Colonic mucosa (tissue), 4 donors: ENCODE measurements at regions of chr5 and their contacts with region 1.

Region 1: GRCh38 chr5:8329773-8330172 is 460.8 kb downstream of the MTRR start:
- DNase-seq: no peak
- H3K4me3 ChIP-seq: no peak overlapping the region
- H3K27ac ChIP-seq: no peak overlapping the region
- H3K4me1 ChIP-seq: no peaks in the 10 kb centered on the region
- H3K27me3 ChIP-seq: no peaks in the 10 kb centered on the region
- CTCF ChIP-seq: no peak

Region 2: DNA sequence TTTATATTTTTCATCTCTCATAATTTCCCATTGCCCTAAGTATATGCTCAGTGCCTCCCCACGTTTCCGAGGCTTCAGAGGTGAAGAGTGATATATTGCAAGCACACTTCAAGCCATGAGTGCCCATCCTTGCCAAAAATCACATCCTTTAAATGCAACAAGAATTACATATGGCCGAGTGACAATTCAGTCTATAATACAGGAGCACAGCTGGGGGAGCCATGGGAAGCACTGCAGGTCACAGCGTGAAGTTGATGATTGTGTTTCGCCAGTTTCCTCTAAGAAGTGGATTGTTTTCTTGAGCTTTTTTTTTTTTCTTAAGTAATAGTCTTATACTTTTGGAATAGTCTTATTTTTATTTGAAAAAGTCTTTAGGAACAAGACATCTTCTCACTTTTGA is 399.8 kb before region 1 on chr5:
- intact Hi-C with region 1: loop called (anchors 10 kb)
- DNase-seq: no peak
- H3K4me3 ChIP-seq: no peak overlapping the region
- H3K27ac ChIP-seq: no peak overlapping the region
- H3K4me1 ChIP-seq: no peaks in the 10 kb centered on the region
- H3K27me3 ChIP-seq: no peaks in the 10 kb centered on the region
- CTCF ChIP-seq: no peak